GM12878 (cell line): ENCODE measurements at regions of chr10 and their contacts with region 1.

Region 1: GRCh38 chr10:10623958-10624566 is 393.6 kb upstream of the CELF2 start:
- DNase-seq: no peak
- ATAC-seq: no peak
- H3K4me3 ChIP-seq: no peak overlapping the region
- H3K27ac ChIP-seq: no peak overlapping the region
- H3K4me1 ChIP-seq: no peaks in the 10 kb centered on the region; the same call in 1 of the 2 replicates
- H3K27me3 ChIP-seq: no peaks in the 10 kb centered on the region
- CTCF ChIP-seq: no peak
- EP300 ChIP-seq: no peak
- POLR2A ChIP-seq: no peak
- RAD21 ChIP-seq: no peak

Region 2: GRCh38 chr10:10533417-10533816 is 90.6 kb before region 1 on chr10:
- CTCF ChIA-PET with region 1: no interaction called
- POLR2A ChIA-PET with region 1: no interaction called
- RAD21 ChIA-PET with region 1: no interaction called
- SMC1A ChIA-PET with region 1: no interaction called
- in situ Hi-C with region 1: no loop called
- intact Hi-C with region 1: no loop called
- DNase-seq: no peak
- ATAC-seq: no peak
- H3K4me3 ChIP-seq: no peak overlapping the region
- H3K27ac ChIP-seq: no peak overlapping the region
- H3K4me1 ChIP-seq: no peaks in the 10 kb centered on the region
- H3K27me3 ChIP-seq: no peaks in the 10 kb centered on the region
- CTCF ChIP-seq: no peak
- EP300 ChIP-seq: no peak
- POLR2A ChIP-seq: no peak
- RAD21 ChIP-seq: no peak

Region 3: GRCh38 chr10:11058965-11059364 is 434.9 kb after region 1 on chr10:
- CTCF ChIA-PET with region 1: no interaction called
- POLR2A ChIA-PET with region 1: interaction called, 10 read pairs
- RAD21 ChIA-PET with region 1: no interaction called
- SMC1A ChIA-PET with region 1: no interaction called
- in situ Hi-C with region 1: no loop called
- intact Hi-C with region 1: no loop called
- DNase-seq: no peak
- ATAC-seq: no peak
- H3K4me3 ChIP-seq: no peak overlapping the region
- H3K27ac ChIP-seq: no peak overlapping the region
- H3K4me1 ChIP-seq: no peaks in the 10 kb centered on the region
- H3K27me3 ChIP-seq: no peaks in the 10 kb centered on the region
- CTCF ChIP-seq: no peak
- EP300 ChIP-seq: no peak
- POLR2A ChIP-seq: no peak
- RAD21 ChIP-seq: no peak